ENCODE measurements at regions of chr20 and their contacts with region 1.

Region 1: GRCh38 chr20:37534401-37535157 is 6.9 kb upstream of the BLCAP start:
- DNase-seq: no peak
- ATAC-seq: peak; percentile 91

Region 2: GRCh38 chr20:37042986-37043972 is 491.3 kb before region 1 on chr20:
- intact Hi-C with region 1: no loop called
- DNase-seq: no peak
- ATAC-seq: no peak

Region 3: GRCh38 chr20:37202267-37202943 is 332.2 kb before region 1 on chr20:
- intact Hi-C with region 1: loop called (anchors 5 kb)
- DNase-seq: no peak
- ATAC-seq: peak; percentile 68

Region 4: GRCh38 chr20:37270576-37271420 is 263.8 kb before region 1 on chr20:
- intact Hi-C with region 1: loop called (anchors 5 kb)
- DNase-seq: no peak
- ATAC-seq: peak; percentile 60

Region 5: GRCh38 chr20:37640600-37641561 is 106.3 kb after region 1 on chr20:
- intact Hi-C with region 1: no loop called
- DNase-seq: no peak
- ATAC-seq: no peak

Measured in left ventricle myocardium superior (tissue), 1 donor.